GM12878 (cell line): ENCODE measurements at regions of chr14 and their contacts with region 1.

Region 1: GRCh38 chr14:50773632-50774541 is 57.1 kb downstream of the NIN start:
- DNase-seq: no peak
- ATAC-seq: peak; percentile 67; the same call in 2 of the 3 replicates
- H3K4me3 ChIP-seq: no peak overlapping the region
- H3K27ac ChIP-seq: no peak overlapping the region
- H3K4me1 ChIP-seq: no peaks in the 10 kb centered on the region; the same call in 1 of the 2 replicates
- H3K27me3 ChIP-seq: no peaks in the 10 kb centered on the region
- CTCF ChIP-seq: peak; percentile 63 to 78 (median 76)
- EP300 ChIP-seq: no peak
- POLR2A ChIP-seq: no peak
- RAD21 ChIP-seq: peak; percentile 79

Region 2: DNA sequence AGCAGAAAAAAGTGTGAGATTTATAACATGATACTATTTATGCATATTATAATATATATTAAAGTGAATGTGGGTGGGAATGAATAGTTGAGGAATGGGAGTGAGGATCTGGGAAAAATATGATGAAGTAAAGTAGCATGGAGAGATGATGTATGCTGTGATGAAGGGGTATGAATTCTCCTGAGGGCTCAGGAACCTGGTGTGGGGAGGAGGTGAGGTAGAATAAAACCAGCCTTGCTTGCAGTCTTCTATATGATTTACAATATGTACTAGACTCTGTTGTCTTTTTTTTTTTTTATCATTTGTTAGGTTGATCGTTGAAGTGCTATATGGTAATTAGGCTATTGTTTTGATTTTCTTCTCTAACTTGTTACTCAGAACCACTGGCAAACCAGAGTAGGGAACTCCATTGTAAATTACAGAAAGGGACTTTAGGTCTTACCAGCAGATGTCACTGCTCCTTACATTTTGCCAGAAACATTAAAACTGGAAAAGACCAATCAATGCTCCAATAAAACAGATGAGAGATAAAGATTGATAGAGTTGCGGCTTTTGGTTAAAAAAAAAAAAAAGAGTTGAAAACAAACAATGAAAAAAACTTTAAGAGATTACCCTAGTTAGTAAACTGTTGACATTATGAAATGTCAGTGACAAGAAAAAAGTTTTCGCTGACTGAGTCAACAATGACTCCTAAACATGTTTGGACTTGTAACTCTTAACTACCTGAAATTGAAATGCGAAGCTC is 174.0 kb before region 1 on chr14:
- CTCF ChIA-PET with region 1: interaction called, 120 read pairs
- POLR2A ChIA-PET with region 1: no interaction called
- RAD21 ChIA-PET with region 1: interaction called, 57 read pairs
- SMC1A ChIA-PET with region 1: interaction called, 53 read pairs
- in situ Hi-C with region 1: loop called (anchors 5 kb)
- intact Hi-C with region 1: loop called (anchors 2 kb)
- DNase-seq: no peak
- ATAC-seq: peak; percentile 76
- H3K4me3 ChIP-seq: no peak overlapping the region
- H3K27ac ChIP-seq: no peak overlapping the region
- H3K4me1 ChIP-seq: no peaks in the 10 kb centered on the region
- H3K27me3 ChIP-seq: no peaks in the 10 kb centered on the region
- CTCF ChIP-seq: peak; percentile 49 to 67 (median 55); a peak in 5 of 6 replicates
- EP300 ChIP-seq: no peak
- POLR2A ChIP-seq: no peak
- RAD21 ChIP-seq: peak; percentile 79

Region 3: GRCh38 chr14:50631408-50631821 is 142.5 kb before region 1 on chr14:
- CTCF ChIA-PET with region 1: interaction called, 17 read pairs
- POLR2A ChIA-PET with region 1: no interaction called
- RAD21 ChIA-PET with region 1: interaction called, 4 read pairs
- SMC1A ChIA-PET with region 1: interaction called, 7 read pairs
- in situ Hi-C with region 1: no loop called
- intact Hi-C with region 1: no loop called
- DNase-seq: no peak
- ATAC-seq: no peak
- H3K4me3 ChIP-seq: no peak overlapping the region
- H3K27ac ChIP-seq: no peak overlapping the region
- H3K4me1 ChIP-seq: no peaks in the 10 kb centered on the region
- H3K27me3 ChIP-seq: no peaks in the 10 kb centered on the region
- CTCF ChIP-seq: no peak
- EP300 ChIP-seq: no peak
- POLR2A ChIP-seq: no peak
- RAD21 ChIP-seq: no peak

Region 4: GRCh38 chr14:50726372-50727107 is 47.3 kb before region 1 on chr14:
- CTCF ChIA-PET with region 1: interaction called, 27 read pairs
- POLR2A ChIA-PET with region 1: no interaction called
- RAD21 ChIA-PET with region 1: interaction called, 9 read pairs
- SMC1A ChIA-PET with region 1: interaction called, 5 read pairs
- in situ Hi-C with region 1: no loop called
- intact Hi-C with region 1: no loop called
- DNase-seq: no peak
- ATAC-seq: no peak
- H3K4me3 ChIP-seq: no peak overlapping the region
- H3K27ac ChIP-seq: no peak overlapping the region
- H3K4me1 ChIP-seq: no peaks in the 10 kb centered on the region
- H3K27me3 ChIP-seq: no peaks in the 10 kb centered on the region
- CTCF ChIP-seq: no peak
- EP300 ChIP-seq: no peak
- POLR2A ChIP-seq: no peak
- RAD21 ChIP-seq: 0 out of 2 replicates have a peak, but pooled peaks have one; percentile 0

Region 5: GRCh38 chr14:50756300-50756699 is 17.6 kb before region 1 on chr14:
- CTCF ChIA-PET with region 1: interaction called, 140 read pairs
- POLR2A ChIA-PET with region 1: no interaction called
- RAD21 ChIA-PET with region 1: interaction called, 4 read pairs
- SMC1A ChIA-PET with region 1: interaction called, 87 read pairs
- in situ Hi-C with region 1: no loop called
- intact Hi-C with region 1: no loop called
- DNase-seq: no peak
- ATAC-seq: peak; percentile 75
- H3K4me3 ChIP-seq: no peak overlapping the region
- H3K27ac ChIP-seq: peak overlapping the region; percentile 51
- H3K4me1 ChIP-seq: peaks cover 11% of the 10 kb centered on the region
- H3K27me3 ChIP-seq: no peaks in the 10 kb centered on the region
- CTCF ChIP-seq: no peak
- EP300 ChIP-seq: no peak
- POLR2A ChIP-seq: no peak
- RAD21 ChIP-seq: no peak

Region 6: DNA sequence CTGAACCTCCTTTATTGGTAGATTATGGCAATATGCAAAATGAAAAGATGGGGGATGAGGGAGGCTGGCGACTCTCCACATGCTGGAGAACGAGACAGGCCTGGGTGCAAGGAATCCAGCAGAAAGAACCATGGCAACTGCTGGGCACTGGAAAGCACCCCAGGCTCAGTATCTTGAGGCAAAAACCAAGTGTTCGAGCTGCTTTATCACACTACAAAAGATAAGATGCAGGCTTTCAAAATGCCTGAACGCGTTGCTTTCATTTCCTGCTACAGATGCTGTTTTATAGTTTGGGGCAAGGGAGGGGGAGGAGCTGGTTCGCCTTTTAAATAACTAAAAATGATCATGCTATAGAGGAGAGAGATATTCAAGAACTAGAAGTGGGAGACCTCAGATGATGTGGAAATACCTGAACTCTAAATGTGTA is 18.2 kb after region 1 on chr14:
- CTCF ChIA-PET with region 1: interaction called, 183 read pairs
- POLR2A ChIA-PET with region 1: no interaction called
- RAD21 ChIA-PET with region 1: interaction called, 39 read pairs
- SMC1A ChIA-PET with region 1: interaction called, 60 read pairs
- in situ Hi-C with region 1: no loop called
- intact Hi-C with region 1: no loop called
- DNase-seq: no peak
- ATAC-seq: peak; percentile 37
- H3K4me3 ChIP-seq: peak overlapping the region; percentile 65
- H3K27ac ChIP-seq: peak overlapping the region; percentile 97
- H3K4me1 ChIP-seq: peaks cover 95% of the 10 kb centered on the region
- H3K27me3 ChIP-seq: no peaks in the 10 kb centered on the region
- CTCF ChIP-seq: no peak
- EP300 ChIP-seq: no peak
- POLR2A ChIP-seq: peak; percentile 33; the same call in 1 of the 2 replicates
- RAD21 ChIP-seq: no peak

Region 7: DNA sequence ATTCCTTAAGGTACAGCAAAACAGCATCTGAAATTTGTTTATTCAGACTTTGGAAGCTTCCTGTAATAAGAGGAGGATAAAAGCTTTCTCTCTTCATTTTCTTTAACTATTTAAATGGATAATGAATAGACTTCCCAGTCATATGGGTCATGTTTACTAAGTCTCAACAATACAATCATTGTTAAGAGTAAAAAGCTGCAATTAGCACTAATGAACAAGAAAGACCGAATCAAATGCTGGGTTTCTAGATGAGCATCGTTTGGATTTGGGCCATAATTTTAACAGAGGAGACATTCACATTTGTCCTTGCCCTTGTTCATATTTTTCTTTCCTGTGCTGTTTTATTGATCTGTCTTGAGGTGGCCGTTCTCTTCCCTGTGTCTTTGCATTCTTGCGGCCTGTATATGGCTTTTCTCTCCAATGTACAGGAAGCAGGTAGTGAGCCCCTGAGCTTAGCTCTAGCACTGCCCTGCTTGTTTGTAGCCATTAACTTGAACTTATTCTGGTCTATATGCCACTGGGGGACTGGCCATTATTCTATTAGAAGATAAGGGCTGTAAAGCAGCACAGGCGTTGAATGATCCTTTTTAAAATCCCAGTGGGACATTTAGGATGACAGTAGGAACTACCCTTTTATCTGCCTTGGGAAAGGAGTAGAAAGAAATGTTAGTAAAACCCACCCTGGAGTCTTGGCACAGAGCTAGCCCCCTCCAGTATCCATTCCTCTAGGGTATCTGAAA is 132.6 kb after region 1 on chr14:
- CTCF ChIA-PET with region 1: no interaction called
- POLR2A ChIA-PET with region 1: no interaction called
- RAD21 ChIA-PET with region 1: no interaction called
- SMC1A ChIA-PET with region 1: no interaction called
- in situ Hi-C with region 1: no loop called
- intact Hi-C with region 1: no loop called
- DNase-seq: no peak
- ATAC-seq: no peak
- H3K4me3 ChIP-seq: no peak overlapping the region
- H3K27ac ChIP-seq: no peak overlapping the region
- H3K4me1 ChIP-seq: no peaks in the 10 kb centered on the region
- H3K27me3 ChIP-seq: no peaks in the 10 kb centered on the region
- CTCF ChIP-seq: no peak
- EP300 ChIP-seq: no peak
- POLR2A ChIP-seq: no peak
- RAD21 ChIP-seq: no peak

Region 8: GRCh38 chr14:50964595-50965390 is 190.9 kb after region 1 on chr14:
- CTCF ChIA-PET with region 1: no interaction called
- POLR2A ChIA-PET with region 1: no interaction called
- RAD21 ChIA-PET with region 1: no interaction called
- SMC1A ChIA-PET with region 1: no interaction called
- in situ Hi-C with region 1: no loop called
- intact Hi-C with region 1: no loop called
- DNase-seq: no peak
- ATAC-seq: no peak
- H3K4me3 ChIP-seq: no peak overlapping the region
- H3K27ac ChIP-seq: no peak overlapping the region
- H3K4me1 ChIP-seq: no peaks in the 10 kb centered on the region
- H3K27me3 ChIP-seq: no peaks in the 10 kb centered on the region; a peak in 1 of 4 replicates
- CTCF ChIP-seq: no peak
- EP300 ChIP-seq: no peak
- POLR2A ChIP-seq: no peak
- RAD21 ChIP-seq: no peak

Region 9: DNA sequence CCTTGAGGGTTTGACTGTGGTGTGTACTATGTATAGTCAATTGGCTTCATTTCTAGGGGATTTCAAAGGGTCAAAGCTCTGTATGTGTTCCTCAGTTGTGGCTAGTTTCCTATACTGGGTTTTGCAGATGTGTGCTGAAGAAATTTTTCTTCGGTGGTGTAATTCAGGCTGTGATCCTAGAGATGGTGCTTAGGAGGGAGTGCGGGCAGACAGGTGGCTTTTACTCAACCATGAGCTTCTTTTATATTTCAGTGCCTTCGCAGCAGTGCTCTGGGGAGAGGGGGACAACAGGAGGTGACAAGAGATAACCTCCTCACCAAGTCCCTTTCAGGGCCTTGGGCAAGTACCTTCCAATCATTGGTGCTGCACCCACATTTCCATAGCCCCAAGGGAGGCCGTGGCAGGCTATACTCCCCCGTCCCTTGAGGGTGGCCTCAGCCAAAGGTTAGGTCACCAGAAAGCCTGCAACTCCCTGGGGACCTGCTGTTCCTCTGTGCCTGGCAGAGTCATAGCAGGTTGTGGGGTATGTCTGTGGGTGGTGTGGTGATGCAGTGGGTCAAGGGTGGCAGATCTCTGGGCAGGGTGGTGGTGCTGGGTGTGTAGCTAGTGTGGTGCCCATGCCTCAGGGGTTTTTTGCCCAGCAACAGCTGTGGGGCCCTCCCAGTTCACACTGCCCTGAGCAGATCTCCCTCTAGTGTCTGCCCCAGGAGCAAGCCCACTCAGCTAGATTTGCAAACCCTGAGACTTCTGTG is 429.2 kb after region 1 on chr14:
- CTCF ChIA-PET with region 1: no interaction called
- POLR2A ChIA-PET with region 1: no interaction called
- RAD21 ChIA-PET with region 1: no interaction called
- SMC1A ChIA-PET with region 1: no interaction called
- in situ Hi-C with region 1: no loop called
- intact Hi-C with region 1: no loop called
- DNase-seq: peak; percentile 81
- ATAC-seq: peak; percentile 86
- H3K4me3 ChIP-seq: no peak overlapping the region
- H3K27ac ChIP-seq: peak overlapping the region; percentile 7; the same call in 1 of the 2 replicates
- H3K4me1 ChIP-seq: peaks cover 20% of the 10 kb centered on the region
- H3K27me3 ChIP-seq: no peaks in the 10 kb centered on the region; a peak in 1 of 4 replicates
- CTCF ChIP-seq: peak; percentile 27 to 38 (median 35); a peak in 4 of 6 replicates
- EP300 ChIP-seq: no peak
- POLR2A ChIP-seq: no peak
- RAD21 ChIP-seq: peak; percentile 30; the same call in 1 of the 2 replicates